H1 (cell line): ENCODE measurements at regions of chr3 and their contacts with region 1.

Region 1: GRCh38 chr3:69368129-69368741 is 17.7 kb downstream of the FRMD4B start:
- DNase-seq: no peak
- H3K4me3 ChIP-seq: no peak overlapping the region
- H3K27ac ChIP-seq: no peak overlapping the region
- H3K4me1 ChIP-seq: no peaks in the 10 kb centered on the region
- H3K27me3 ChIP-seq: no peaks in the 10 kb centered on the region
- CTCF ChIP-seq: no peak
- EP300 ChIP-seq: no peak
- POLR2A ChIP-seq: no peak
- RAD21 ChIP-seq: no peak

Region 2: GRCh38 chr3:69219101-69219708 is 149.0 kb before region 1 on chr3:
- CTCF ChIA-PET with region 1: no interaction called
- POLR2A ChIA-PET with region 1: no interaction called
- DNase-seq: no peak
- H3K4me3 ChIP-seq: no peak overlapping the region
- H3K27ac ChIP-seq: no peak overlapping the region
- H3K4me1 ChIP-seq: no peaks in the 10 kb centered on the region
- H3K27me3 ChIP-seq: no peaks in the 10 kb centered on the region
- CTCF ChIP-seq: no peak
- EP300 ChIP-seq: no peak
- POLR2A ChIP-seq: no peak
- RAD21 ChIP-seq: no peak

Region 3: DNA sequence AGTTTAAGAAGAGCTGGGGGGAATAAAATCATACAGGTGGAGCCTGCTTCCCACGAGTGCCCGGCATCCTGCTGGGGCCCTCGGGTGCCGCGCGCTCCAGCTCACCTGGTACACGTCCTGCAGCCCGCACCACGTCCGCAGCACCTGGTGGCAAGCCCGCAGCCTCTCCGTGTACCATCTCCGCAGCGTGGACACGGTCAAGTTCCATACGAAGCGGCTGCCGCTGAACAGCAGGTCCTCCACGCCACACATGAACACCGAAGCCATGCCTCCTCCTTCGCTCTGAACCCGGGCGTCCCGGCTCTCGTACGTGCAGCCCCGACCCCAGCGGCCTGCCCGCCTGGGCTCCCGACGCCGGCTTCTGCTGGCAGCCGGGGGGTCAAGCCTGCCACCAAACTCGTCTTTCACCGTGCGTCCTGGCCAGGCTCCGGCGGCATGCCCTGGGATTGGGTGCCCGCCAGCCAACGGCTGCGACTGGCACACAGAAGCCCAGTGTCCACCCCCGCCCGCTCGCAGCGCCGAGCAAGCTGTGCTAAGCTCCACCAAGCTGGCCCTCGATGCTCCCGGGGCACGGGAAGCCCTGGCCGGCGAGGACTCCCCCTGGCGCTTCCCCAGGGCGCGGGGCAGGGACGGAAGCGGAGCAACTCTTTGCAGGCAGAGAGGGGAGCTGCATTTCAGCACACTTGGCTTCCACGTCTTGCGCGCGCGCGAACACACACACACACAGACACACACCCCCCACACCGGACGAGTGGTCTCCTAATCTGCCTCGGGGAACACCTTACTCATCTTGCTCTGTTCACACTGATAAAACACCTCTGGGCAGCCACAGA is 17.7 kb after region 1 on chr3 and contains the start of gene FRMD4B:
- CTCF ChIA-PET with region 1: interaction called, 12 read pairs
- POLR2A ChIA-PET with region 1: interaction called, 4 read pairs
- DNase-seq: peak in 1 of 2 experiments; percentile 74
- H3K4me3 ChIP-seq: peak within 1 kb of the TSS; percentile 30 to 61 (median 58)
- H3K27ac ChIP-seq: no peak within 1 kb of the TSS
- H3K4me1 ChIP-seq: peaks cover 0 to 4% (median 1%) of the 10 kb centered on the region in 4 experiments; a peak in 3 of 7 replicates
- H3K27me3 ChIP-seq: peaks cover 5 to 20% (median 15%) of the 10 kb centered on the region in 4 experiments
- CTCF ChIP-seq: no peak
- EP300 ChIP-seq: no peak
- POLR2A ChIP-seq: no peak
- RAD21 ChIP-seq: no peak
- total RNA-seq, gene FRMD4B: 5.4 and 7.2 TPM in 2 replicates